Endothelial cell of umbilical vein (primary cell): ENCODE measurements at regions of chr20 and their contacts with region 1.

Region 1: GRCh38 chr20:63698739-63699465 is 2.5 kb downstream of the TNFRSF6B start:
- DNase-seq: peak; percentile 90
- H3K4me3 ChIP-seq: no peak overlapping the region
- H3K27ac ChIP-seq: peak overlapping the region; percentile 91
- H3K4me1 ChIP-seq: peaks cover 35% of the 10 kb centered on the region
- H3K27me3 ChIP-seq: no peaks in the 10 kb centered on the region
- CTCF ChIP-seq: no peak
- POLR2A ChIP-seq: peak; percentile 24

Region 2: GRCh38 chr20:63657937-63658748 is 40.8 kb before region 1 on chr20 and contains the start of gene RTEL1:
- CTCF ChIA-PET with region 1: interaction called, 3 read pairs
- POLR2A ChIA-PET with region 1: no interaction called
- dilution Hi-C with region 1: no loop called
- intact Hi-C with region 1: loop called (anchors 2 kb)
- DNase-seq: peak; percentile 93
- H3K4me3 ChIP-seq: peak within 1 kb of the TSS; percentile 60 to 83 (median 62)
- H3K27ac ChIP-seq: peak within 1 kb of the TSS; percentile 50
- H3K4me1 ChIP-seq: peaks cover 10% of the 10 kb centered on the region
- H3K27me3 ChIP-seq: no peaks in the 10 kb centered on the region
- CTCF ChIP-seq: no peak
- POLR2A ChIP-seq: peak; percentile 54
- total RNA-seq, gene RTEL1: 38.6 and 44.9 TPM in 2 replicates

Region 3: DNA sequence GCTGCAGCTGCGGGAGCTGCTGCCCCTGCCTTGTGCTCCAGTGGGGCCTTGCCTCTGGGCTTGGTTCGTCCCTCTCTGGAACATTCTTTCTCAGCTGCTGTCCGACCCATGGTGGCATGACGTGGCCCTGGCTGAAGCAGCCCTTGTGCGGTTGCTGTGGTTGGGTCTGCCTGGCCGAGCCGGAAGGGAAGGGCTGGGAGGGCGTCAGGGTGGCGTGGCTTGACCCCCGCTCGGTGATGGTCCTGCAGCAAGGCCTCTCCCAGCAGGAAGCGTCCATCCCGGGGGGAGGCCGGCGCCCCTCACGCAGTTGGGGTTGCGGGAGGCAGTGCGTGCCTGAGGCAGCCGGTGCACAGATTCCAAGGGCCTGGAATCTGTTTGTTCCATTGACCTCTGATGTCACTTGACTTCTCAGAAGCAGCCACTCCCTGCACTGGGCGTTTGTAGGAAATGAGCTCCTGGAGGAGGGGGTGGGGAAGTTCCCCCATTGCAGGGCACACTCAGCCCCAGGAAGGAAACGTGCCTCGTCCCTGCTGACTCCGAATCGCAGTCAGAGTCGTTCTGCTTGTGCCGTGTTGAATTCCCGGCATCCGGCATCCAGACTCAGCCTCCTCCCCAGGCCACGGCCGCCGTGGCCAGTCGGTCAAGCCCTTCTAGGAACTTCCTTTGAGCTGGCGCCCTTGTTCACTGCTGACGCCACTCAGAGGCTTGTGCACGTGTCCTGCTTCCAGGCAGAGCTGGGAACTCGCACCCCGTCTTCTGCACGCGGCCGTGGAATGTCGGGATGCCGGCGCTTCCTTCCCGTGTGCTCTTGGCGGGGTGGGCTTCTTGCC is 12.2 kb before region 1 on chr20:
- CTCF ChIA-PET with region 1: interaction called, 5 read pairs
- POLR2A ChIA-PET with region 1: interaction called, 3 read pairs
- dilution Hi-C with region 1: no loop called
- intact Hi-C with region 1: loop called (anchors 1 kb)
- DNase-seq: peak; percentile 92
- H3K4me3 ChIP-seq: no peak overlapping the region
- H3K27ac ChIP-seq: peak overlapping the region; percentile 79
- H3K4me1 ChIP-seq: peaks cover 49% of the 10 kb centered on the region
- H3K27me3 ChIP-seq: no peaks in the 10 kb centered on the region
- CTCF ChIP-seq: no peak
- POLR2A ChIP-seq: peak; percentile 55

Region 4: GRCh38 chr20:63739130-63740069 is 40.5 kb after region 1 on chr20 and contains the start of gene SLC2A4RG:
- CTCF ChIA-PET with region 1: interaction called, 5 read pairs
- POLR2A ChIA-PET with region 1: no interaction called
- dilution Hi-C with region 1: no loop called
- intact Hi-C with region 1: loop called (anchors 5 kb)
- DNase-seq: peak; percentile 40
- H3K4me3 ChIP-seq: peak within 1 kb of the TSS; percentile 41 to 72 (median 52)
- H3K27ac ChIP-seq: no peak within 1 kb of the TSS
- H3K4me1 ChIP-seq: peaks cover 9% of the 10 kb centered on the region
- H3K27me3 ChIP-seq: no peaks in the 10 kb centered on the region
- CTCF ChIP-seq: no peak
- POLR2A ChIP-seq: no peak
- total RNA-seq, gene SLC2A4RG: 69.3 and 69.4 TPM in 2 replicates

Region 5: DNA sequence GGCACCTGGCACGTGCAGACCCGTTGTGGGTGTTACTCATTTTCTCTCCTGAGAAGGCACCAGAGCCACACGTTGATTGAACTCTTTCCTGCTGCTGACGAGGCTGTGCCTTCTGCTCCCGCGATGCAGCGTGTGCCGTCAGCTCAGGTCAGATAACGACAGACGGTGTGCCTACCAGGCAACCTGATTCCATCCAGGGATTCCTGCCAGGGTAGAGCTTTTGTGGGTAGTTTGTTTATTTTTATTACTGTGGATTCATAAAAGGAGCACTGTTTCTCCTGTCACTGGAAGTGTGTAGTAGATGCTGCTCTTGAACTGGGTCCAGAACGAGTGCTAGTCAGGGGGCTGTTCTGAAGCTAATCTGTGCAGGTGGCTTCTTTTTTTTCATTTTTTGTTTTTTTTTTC is 302.7 kb after region 1 on chr20:
- CTCF ChIA-PET with region 1: no interaction called
- POLR2A ChIA-PET with region 1: no interaction called
- dilution Hi-C with region 1: no loop called
- intact Hi-C with region 1: no loop called
- DNase-seq: no peak
- H3K4me3 ChIP-seq: no peak overlapping the region
- H3K27ac ChIP-seq: no peak overlapping the region
- H3K4me1 ChIP-seq: no peaks in the 10 kb centered on the region
- H3K27me3 ChIP-seq: no peaks in the 10 kb centered on the region
- CTCF ChIP-seq: no peak
- POLR2A ChIP-seq: no peak